ENCODE measurements at regions of chr20 and their contacts with region 1.

Region 1: DNA sequence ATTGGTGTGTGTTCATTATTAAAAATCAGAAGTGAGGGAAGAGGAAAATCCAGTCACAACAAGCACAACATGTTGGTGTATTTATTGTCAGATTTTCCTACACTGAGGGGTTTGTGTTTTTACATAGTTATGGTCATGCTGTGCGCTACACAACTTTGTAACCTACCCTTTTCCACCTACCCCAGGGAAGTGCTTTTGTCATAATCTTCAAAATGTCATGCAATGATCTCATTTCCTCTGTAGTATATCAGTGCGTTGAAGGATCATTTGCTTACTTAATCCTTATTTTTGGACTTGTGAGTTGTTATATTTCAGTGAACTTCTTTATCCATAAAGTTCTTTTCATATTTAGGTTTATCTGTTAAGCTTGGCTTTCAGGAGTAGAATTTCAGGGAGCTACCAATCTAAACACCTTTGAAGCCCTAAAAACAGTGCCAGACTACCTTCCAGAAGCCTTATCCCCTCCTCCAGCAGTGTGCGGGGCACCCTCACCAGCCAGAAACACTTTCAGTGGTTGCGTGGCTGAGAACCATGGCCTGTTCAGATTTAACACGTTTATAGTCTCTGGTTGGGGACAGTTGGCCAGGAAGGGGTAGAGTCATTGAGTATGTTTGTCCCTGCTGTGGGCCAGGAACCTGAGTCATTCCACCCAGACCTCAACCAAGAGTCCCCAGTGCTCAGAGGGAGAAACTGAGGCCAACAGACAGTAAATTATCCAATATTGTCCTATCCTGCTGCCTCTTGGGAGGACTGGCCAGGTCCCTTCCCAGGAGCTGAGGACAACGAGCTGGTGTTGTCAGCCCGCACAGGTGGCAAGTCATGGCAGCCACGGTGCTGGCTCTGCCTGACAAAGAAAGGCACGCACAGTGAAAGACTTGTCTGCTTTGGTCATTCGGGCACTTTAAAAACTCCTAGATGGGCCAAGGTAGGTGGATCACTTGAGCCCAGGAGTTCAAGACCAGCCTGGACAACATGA is 40.3 kb downstream of the STK35 start:
- DNase-seq: no peak
- H3K4me3 ChIP-seq: no peak overlapping the region
- H3K27ac ChIP-seq: peak overlapping the region in 3 of 4 donors; percentile 50 to 68 (median 68)
- H3K4me1 ChIP-seq: peaks cover 60 to 64% (median 62%) of the 10 kb centered on the region in 4 donors
- H3K27me3 ChIP-seq: no peaks in the 10 kb centered on the region
- CTCF ChIP-seq: no peak
- EP300 ChIP-seq: no peak
- POLR2A ChIP-seq: no peak

Region 2: DNA sequence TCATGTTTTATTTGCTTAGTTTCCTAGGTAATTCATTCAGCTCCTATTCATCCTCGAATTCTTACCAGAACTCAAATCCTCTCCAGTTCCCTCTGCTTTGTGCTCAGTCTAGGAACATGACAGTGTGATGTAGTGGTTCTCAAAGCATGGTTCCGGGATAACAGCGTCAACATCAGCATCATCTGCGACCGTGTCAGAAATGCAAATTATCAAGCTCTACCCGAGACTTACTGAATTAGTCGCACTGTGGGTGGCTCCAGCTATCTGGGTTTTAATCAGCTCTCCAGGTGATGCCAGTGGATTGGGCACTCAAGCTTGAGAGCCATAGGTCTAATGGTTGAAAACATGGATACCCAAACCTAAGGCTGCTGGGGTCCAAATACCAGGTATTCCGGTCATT is 48.0 kb before region 1 on chr20:
- intact Hi-C with region 1: loop called (anchors 2 kb)
- DNase-seq: no peak
- H3K4me3 ChIP-seq: no peak overlapping the region
- H3K27ac ChIP-seq: no peak overlapping the region
- H3K4me1 ChIP-seq: no peaks in the 10 kb centered on the region
- H3K27me3 ChIP-seq: peaks cover 0 to 18% (median 5%) of the 10 kb centered on the region in 4 donors
- CTCF ChIP-seq: no peak
- EP300 ChIP-seq: no peak
- POLR2A ChIP-seq: no peak